K562 (cell line): ENCODE measurements at regions of chr20 and their contacts with region 1.

Region 1: GRCh38 chr20:62668441-62669027 is 26.2 kb downstream of the SLCO4A1 start:
- DNase-seq: peak; percentile 67 to 81 (median 75)
- ATAC-seq: peak; percentile 87
- H3K4me3 ChIP-seq: no peak overlapping the region
- H3K27ac ChIP-seq: no peak overlapping the region
- H3K4me1 ChIP-seq: peaks cover 0 to 42% of the 10 kb centered on the region in 2 experiments; a peak in 2 of 5 replicates
- H3K27me3 ChIP-seq: no peaks in the 10 kb centered on the region
- CTCF ChIP-seq: peak; percentile 88 to 95 (median 93)
- EP300 ChIP-seq: no peak
- POLR2A ChIP-seq: no peak
- RAD21 ChIP-seq: peak; percentile 89 to 95

Region 2: GRCh38 chr20:62793912-62794724 is 125.6 kb after region 1 on chr20:
- CTCF ChIA-PET with region 1: interaction called, 20 read pairs
- POLR2A ChIA-PET with region 1: no interaction called
- in situ Hi-C with region 1: loop called (anchors 5 kb)
- intact Hi-C with region 1: loop called (anchors 1 kb)
- DNase-seq: peak; percentile 96 to 97 (median 96)
- ATAC-seq: peak; percentile 89
- H3K4me3 ChIP-seq: peak overlapping the region; percentile 61
- H3K27ac ChIP-seq: peak overlapping the region; percentile 88
- H3K4me1 ChIP-seq: peaks cover 10 to 67% of the 10 kb centered on the region in 2 experiments; a peak in 4 of 5 replicates
- H3K27me3 ChIP-seq: peaks cover 3 to 8% of the 10 kb centered on the region in 2 experiments; a peak in 3 of 5 replicates
- CTCF ChIP-seq: peak in 1 of 3 experiments; percentile 18; a peak in 1 of 6 replicates
- EP300 ChIP-seq: 0 out of 2 replicates have a peak, but pooled peaks have one; percentile 7
- POLR2A ChIP-seq: peak; percentile 93
- RAD21 ChIP-seq: no peak

Region 3: GRCh38 chr20:62808211-62808865 is 139.8 kb after region 1 on chr20:
- CTCF ChIA-PET with region 1: interaction called, 21 read pairs
- POLR2A ChIA-PET with region 1: no interaction called
- in situ Hi-C with region 1: no loop called
- intact Hi-C with region 1: loop called (anchors 5 kb)
- DNase-seq: peak; percentile 66 to 81 (median 72)
- ATAC-seq: peak; percentile 81
- H3K4me3 ChIP-seq: no peak overlapping the region
- H3K27ac ChIP-seq: no peak overlapping the region
- H3K4me1 ChIP-seq: peaks cover 11 to 64% of the 10 kb centered on the region in 2 experiments
- H3K27me3 ChIP-seq: no peaks in the 10 kb centered on the region
- CTCF ChIP-seq: peak; percentile 86 to 87 (median 86)
- EP300 ChIP-seq: no peak
- POLR2A ChIP-seq: no peak
- RAD21 ChIP-seq: peak; percentile 78 to 83